Activated naive CD4-positive, alpha-beta T cell treated with anti-CD3 and anti-CD28 coated beads for 36 hours (primary cell): ENCODE measurements at regions of chrX and their contacts with region 1.

Region 1: GRCh38 chrX:43836435-43837184 is 45.6 kb downstream of the MAOB start:
- DNase-seq: no peak
- H3K4me3 Mint-ChIP-seq: no peak overlapping the region
- H3K27ac Mint-ChIP-seq: no peak overlapping the region
- H3K4me1 Mint-ChIP-seq: no peaks in the 10 kb centered on the region
- H3K27me3 Mint-ChIP-seq: no peaks in the 10 kb centered on the region

Region 2: DNA sequence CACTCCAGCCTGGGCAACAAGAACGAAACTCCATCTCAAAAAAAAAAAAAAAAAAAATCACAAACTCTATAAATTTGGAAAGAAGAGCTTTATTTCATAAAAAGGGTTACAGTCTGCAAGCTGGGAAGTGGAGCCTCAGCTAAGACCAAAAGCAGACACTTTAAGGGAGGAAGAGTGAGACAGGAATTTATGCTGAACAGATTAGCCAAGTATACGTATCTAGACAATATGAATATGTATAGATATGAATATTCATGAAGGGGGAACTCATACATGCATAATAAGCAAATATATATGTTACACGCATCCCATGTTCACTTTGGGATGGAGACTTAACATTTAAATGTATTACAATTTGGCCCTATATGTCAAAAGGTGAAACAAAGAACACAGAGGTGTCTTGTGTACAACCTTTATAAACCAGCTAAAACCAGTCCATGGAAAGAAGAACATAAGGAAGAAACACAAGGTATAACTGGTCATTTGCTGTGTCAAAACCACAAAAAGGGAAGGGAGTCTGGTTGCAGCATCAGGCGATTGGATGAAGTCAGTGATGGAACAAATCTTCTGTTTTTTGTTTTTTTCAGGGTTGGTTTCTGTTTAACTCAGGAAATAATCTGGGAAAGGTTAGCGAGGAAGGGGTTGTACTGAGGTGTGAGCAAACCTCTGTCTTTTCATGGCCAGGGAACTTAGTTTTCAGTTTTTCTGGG is 310.6 kb before region 1 on chrX:
- CTCF ChIA-PET with region 1: no interaction called
- intact Hi-C with region 1: no loop called
- DNase-seq: no peak
- H3K4me3 Mint-ChIP-seq: no peak overlapping the region
- H3K27ac Mint-ChIP-seq: no peak overlapping the region
- H3K4me1 Mint-ChIP-seq: peaks cover 3% of the 10 kb centered on the region
- H3K27me3 Mint-ChIP-seq: peaks cover 2% of the 10 kb centered on the region

Region 3: DNA sequence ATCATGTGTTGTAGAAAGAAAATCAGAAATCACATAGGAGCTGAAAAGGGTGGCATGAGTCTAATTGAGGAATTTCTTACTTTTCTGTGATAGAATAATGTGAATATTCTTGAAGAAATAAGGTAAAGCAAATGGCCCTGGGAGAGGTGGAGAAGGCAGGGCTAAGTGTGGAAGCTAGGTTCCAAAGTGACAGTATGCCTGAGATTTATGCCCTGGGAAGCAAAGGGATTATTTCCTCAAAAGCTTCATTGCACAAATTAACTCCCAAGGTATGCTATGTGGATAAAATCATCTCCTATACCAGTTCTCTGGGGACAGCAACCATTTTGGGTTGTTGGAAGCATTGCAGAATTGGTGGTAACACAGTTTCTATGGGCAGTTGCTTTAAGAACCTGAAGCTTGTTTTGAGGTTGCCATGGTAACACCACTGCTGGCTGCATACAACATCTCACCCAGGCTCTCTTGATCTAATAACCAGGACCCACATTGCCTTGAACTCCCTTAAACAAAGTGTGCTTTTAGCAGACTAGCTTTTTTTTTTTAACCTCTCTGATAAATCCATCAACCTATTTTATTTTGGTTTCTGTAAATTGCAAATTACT is 159.5 kb before region 1 on chrX:
- CTCF ChIA-PET with region 1: no interaction called
- intact Hi-C with region 1: no loop called
- DNase-seq: no peak
- H3K4me3 Mint-ChIP-seq: no peak overlapping the region
- H3K27ac Mint-ChIP-seq: no peak overlapping the region
- H3K4me1 Mint-ChIP-seq: no peaks in the 10 kb centered on the region
- H3K27me3 Mint-ChIP-seq: no peaks in the 10 kb centered on the region

Region 4: GRCh38 chrX:43939187-43939926 is 102.7 kb after region 1 on chrX:
- CTCF ChIA-PET with region 1: no interaction called
- intact Hi-C with region 1: loop called (anchors 5 kb)
- DNase-seq: no peak
- H3K4me3 Mint-ChIP-seq: no peak overlapping the region
- H3K27ac Mint-ChIP-seq: no peak overlapping the region
- H3K4me1 Mint-ChIP-seq: no peaks in the 10 kb centered on the region
- H3K27me3 Mint-ChIP-seq: no peaks in the 10 kb centered on the region